ENCODE measurements at regions of chr12 and their contacts with region 1.

Region 1: DNA sequence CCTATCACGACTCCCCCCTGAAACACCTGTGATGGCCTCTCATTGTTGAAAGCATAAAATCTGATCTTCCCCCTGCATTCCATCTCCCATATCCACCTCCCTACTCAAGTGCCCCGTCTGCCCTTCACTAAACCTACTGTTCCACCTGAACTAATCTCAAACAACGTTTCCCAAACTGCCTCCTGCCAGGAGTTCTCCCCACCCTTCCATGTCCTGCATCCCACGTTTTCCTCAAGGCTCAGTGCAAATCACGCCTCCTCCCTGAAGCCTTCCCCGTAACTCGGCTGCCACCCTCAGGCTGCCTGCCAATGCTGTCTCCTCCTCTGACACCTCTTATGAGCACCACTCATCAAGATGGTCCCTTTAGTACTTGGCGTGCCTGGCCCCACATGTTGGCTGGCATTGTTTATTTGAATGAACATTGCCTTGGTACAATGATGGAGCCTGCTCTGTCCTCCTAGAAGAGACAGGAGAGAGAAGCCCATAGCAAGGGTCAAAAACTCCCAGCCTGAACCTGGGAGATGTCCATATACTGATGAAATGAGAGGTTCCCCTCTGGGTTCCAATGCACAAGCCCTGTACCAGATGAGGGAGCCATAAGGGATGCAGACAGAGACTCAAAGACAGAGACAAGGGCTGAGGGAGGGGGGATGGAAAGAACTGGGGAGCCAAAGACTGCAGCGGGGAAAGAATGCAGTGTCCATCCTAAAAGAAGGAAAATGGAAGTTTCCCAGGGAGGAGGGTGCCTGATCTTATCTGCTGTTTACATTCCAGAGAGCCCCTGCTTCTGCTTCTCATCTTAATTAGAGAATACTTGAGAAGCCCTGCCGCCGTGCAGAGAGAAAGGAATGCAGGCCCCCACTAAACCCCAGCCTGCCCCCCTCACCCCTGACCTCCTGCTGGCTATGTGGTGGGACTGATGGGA is 27.5 kb downstream of the KRT18 start:
- DNase-seq: peak; percentile 17
- H3K4me3 ChIP-seq: no peak overlapping the region
- H3K27ac ChIP-seq: no peak overlapping the region
- H3K27me3 ChIP-seq: no peaks in the 10 kb centered on the region
- CTCF ChIP-seq: peak; percentile 54

Region 2: DNA sequence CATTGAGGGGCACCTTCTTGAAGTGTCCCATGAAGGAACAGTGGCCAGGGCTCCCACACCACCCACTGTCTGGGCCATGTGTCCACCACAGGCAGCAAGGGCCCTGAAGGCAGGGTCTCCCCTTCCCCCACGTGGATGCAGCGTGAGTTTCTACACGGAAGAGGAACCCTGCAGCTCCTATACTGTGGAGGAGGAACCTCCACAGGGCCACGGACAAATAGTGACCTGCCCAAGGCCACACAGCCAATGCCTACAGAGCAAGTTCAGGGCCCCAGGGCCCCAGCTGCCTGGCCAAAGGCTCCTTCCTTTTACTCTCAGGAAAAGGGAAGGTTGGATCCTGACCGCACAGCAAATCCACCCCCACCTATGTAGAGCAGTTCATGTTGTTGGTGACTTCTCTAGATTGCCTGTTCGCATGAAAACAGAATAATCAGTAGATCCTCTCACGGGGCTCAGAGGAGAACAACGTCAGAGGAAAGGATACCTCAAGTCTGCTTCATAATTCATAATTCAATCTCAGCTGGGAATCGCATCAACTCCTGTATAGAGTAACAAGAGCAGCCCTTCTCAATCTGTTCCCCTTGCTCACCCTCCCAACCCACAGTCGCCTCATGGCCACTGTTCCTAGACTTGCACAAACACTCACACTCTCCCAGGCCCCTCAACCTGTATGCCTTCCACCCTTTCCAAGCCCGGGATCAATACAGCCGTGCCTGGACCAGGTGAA is 347.0 kb before region 1 on chr12:
- in situ Hi-C with region 1: no loop called
- DNase-seq: no peak
- H3K4me3 ChIP-seq: no peak overlapping the region
- H3K27ac ChIP-seq: no peak overlapping the region
- H3K27me3 ChIP-seq: peaks cover 6% of the 10 kb centered on the region
- CTCF ChIP-seq: no peak

Region 3: DNA sequence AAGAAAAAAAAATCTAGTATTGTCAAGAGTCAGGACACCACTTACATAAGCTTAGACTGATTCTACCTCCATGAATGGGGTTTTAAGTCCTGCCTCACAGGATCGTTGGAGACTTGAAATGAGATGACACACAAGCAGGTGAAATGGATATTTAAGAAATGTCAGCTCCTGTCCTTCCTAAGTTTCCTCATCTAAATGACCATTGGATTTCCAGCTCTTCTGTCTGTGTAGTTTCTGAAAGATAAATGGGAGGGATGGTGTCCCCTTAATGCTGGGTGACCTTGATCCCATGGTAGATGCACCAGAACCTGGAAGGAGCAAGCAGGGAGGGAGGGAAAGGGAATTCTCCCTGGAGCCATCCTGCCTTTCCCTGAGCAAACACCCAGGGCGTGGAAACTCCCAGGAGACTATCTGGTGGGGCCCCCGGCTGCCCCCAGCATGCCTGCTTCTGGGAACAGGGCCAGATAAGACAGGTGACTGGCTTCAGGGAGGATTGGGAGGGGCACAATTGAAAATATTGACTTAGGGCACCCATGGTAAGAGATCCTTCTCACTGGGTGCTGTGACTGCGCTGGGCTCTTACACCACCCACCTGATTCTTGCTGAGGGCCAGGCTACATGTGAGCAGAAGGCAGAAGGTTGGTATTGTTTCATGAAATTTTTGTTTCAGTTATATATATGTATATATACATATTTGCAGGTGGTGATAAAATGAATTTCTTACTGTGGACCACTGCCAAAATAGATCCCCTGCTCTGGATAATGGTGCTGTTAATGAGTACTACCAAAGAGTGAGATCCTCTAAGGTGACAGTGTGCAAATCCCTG is 81.1 kb before region 1 on chr12:
- in situ Hi-C with region 1: loop called (anchors 10 kb)
- DNase-seq: no peak
- H3K4me3 ChIP-seq: no peak overlapping the region
- H3K27ac ChIP-seq: no peak overlapping the region
- H3K27me3 ChIP-seq: no peaks in the 10 kb centered on the region
- CTCF ChIP-seq: no peak

Region 4: DNA sequence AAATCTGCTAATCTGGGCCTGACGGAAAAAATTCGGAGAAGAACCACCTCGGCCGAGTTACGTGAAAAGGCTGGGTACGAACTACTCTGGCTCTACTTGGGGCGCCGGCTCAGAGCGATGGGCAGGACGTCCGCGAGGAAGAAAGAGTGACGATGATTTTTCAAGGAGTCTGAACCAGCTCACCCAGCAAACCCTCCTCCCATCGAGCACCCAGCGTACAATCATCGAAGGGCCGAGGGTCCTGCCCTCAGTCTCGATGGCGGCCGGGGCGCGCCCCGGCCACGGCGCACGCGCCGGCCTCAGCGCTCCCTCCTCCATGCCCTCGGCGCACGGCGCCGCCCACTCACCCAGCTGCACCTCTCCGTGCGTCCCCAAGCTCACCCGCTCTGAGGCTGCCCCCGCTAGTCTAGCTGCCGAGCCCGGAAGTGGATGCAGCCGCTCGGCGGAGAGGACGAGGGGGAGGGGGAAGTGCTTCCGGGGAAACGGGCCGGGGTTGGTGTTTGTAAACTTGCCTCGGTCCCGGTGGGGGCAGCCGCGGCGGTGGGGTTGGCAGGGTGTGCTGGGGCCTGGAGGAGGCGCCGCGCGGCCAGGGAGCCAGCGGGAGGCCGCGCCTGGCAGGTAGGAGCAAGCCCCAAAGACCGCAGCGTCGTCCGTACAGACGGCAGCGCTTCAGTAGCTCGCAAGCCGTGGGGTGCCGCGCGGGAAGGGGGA is 204.0 kb after region 1 on chr12 and contains the starts of genes CSAD and ZNF740:
- in situ Hi-C with region 1: no loop called
- DNase-seq: peak; percentile 95
- H3K4me3 ChIP-seq: peak within 1 kb of the TSS; percentile 79
- H3K27ac ChIP-seq: peak within 1 kb of the TSS; percentile 87
- H3K27me3 ChIP-seq: no peaks in the 10 kb centered on the region
- CTCF ChIP-seq: no peak